Endothelial cell of umbilical vein (primary cell): ENCODE measurements at regions of chr2 and their contacts with region 1.

Region 1: GRCh38 chr2:215435809-215436704 is at the start of gene FN1:
- DNase-seq: peak; percentile 99
- H3K4me3 ChIP-seq: peak within 1 kb of the TSS; percentile 77 to 100 (median 99)
- H3K27ac ChIP-seq: peak within 1 kb of the TSS; percentile 100
- H3K4me1 ChIP-seq: peaks cover 44% of the 10 kb centered on the region
- H3K27me3 ChIP-seq: no peaks in the 10 kb centered on the region
- CTCF ChIP-seq: no peak
- POLR2A ChIP-seq: peak; percentile 98
- total RNA-seq, gene FN1: 3,221 and 3,760 TPM in 2 replicates

Region 2: GRCh38 chr2:215136669-215137328 is 299.3 kb before region 1 on chr2:
- CTCF ChIA-PET with region 1: no interaction called
- POLR2A ChIA-PET with region 1: no interaction called
- dilution Hi-C with region 1: no loop called
- intact Hi-C with region 1: no loop called
- DNase-seq: no peak
- H3K4me3 ChIP-seq: no peak overlapping the region
- H3K27ac ChIP-seq: no peak overlapping the region
- H3K4me1 ChIP-seq: no peaks in the 10 kb centered on the region
- H3K27me3 ChIP-seq: peaks cover 0 to 2% of the 10 kb centered on the region in 2 experiments
- CTCF ChIP-seq: no peak
- POLR2A ChIP-seq: no peak

Region 3: GRCh38 chr2:215425021-215425782 is 10.9 kb before region 1 on chr2:
- CTCF ChIA-PET with region 1: interaction called, 10 read pairs
- POLR2A ChIA-PET with region 1: interaction called, 8 read pairs
- dilution Hi-C with region 1: no loop called
- intact Hi-C with region 1: no loop called
- DNase-seq: no peak
- H3K4me3 ChIP-seq: no peak overlapping the region
- H3K27ac ChIP-seq: no peak overlapping the region
- H3K4me1 ChIP-seq: peaks cover 60% of the 10 kb centered on the region
- H3K27me3 ChIP-seq: no peaks in the 10 kb centered on the region
- CTCF ChIP-seq: no peak
- POLR2A ChIP-seq: peak; percentile 58

Region 4: GRCh38 chr2:215601990-215602721 is 166.1 kb after region 1 on chr2:
- CTCF ChIA-PET with region 1: no interaction called
- POLR2A ChIA-PET with region 1: interaction called, 8 read pairs
- dilution Hi-C with region 1: no loop called
- intact Hi-C with region 1: loop called (anchors 1 kb)
- DNase-seq: peak; percentile 97
- H3K4me3 ChIP-seq: peak overlapping the region in 1 of 3 experiments; percentile 19
- H3K27ac ChIP-seq: peak overlapping the region; percentile 85
- H3K4me1 ChIP-seq: peaks cover 24% of the 10 kb centered on the region
- H3K27me3 ChIP-seq: no peaks in the 10 kb centered on the region
- CTCF ChIP-seq: no peak
- POLR2A ChIP-seq: peak; percentile 62

Region 5: DNA sequence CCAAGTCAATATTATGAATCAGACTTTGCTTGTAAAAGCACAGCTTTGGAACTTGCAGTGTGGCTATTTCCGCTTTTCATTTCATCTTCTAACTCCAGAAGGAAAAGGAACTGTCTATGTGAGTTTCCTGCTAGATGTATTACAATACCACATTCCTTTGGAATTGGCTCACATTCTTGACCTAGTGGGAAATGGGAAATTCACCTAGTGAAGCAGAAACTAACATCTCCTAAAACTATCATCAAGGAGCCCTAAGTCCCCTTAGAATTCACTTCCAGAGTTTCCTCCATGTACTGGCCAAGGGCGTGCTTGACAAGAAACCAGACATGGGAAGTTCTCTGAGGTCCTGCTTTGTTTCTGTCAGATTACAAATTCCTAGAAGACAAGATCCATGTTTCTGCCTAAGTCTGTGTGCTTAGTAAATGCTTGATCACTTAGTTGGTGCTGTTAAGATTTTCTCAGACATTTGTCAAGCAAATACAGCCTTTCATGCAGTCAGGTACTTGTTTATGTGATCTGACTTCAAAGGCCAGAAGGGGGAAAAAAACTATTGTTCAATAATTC is 275.5 kb after region 1 on chr2:
- CTCF ChIA-PET with region 1: no interaction called
- POLR2A ChIA-PET with region 1: interaction called, 4 read pairs
- dilution Hi-C with region 1: no loop called
- intact Hi-C with region 1: loop called (anchors 1 kb)
- DNase-seq: peak; percentile 92
- H3K4me3 ChIP-seq: no peak overlapping the region
- H3K27ac ChIP-seq: peak overlapping the region; percentile 98
- H3K4me1 ChIP-seq: peaks cover 51% of the 10 kb centered on the region
- H3K27me3 ChIP-seq: no peaks in the 10 kb centered on the region
- CTCF ChIP-seq: no peak
- POLR2A ChIP-seq: peak; percentile 82

Region 6: GRCh38 chr2:215793747-215794595 is 357.9 kb after region 1 on chr2:
- CTCF ChIA-PET with region 1: no interaction called
- POLR2A ChIA-PET with region 1: no interaction called
- dilution Hi-C with region 1: no loop called
- intact Hi-C with region 1: loop called (anchors 1 kb)
- DNase-seq: peak; percentile 97
- H3K4me3 ChIP-seq: no peak overlapping the region
- H3K27ac ChIP-seq: peak overlapping the region; percentile 82
- H3K4me1 ChIP-seq: peaks cover 44% of the 10 kb centered on the region
- H3K27me3 ChIP-seq: no peaks in the 10 kb centered on the region
- CTCF ChIP-seq: no peak
- POLR2A ChIP-seq: no peak

Region 7: GRCh38 chr2:215920244-215921100 is 484.4 kb after region 1 on chr2:
- CTCF ChIA-PET with region 1: interaction called, 3 read pairs
- POLR2A ChIA-PET with region 1: no interaction called
- dilution Hi-C with region 1: no loop called
- intact Hi-C with region 1: loop called (anchors 1 kb)
- DNase-seq: peak; percentile 87
- H3K4me3 ChIP-seq: no peak overlapping the region
- H3K27ac ChIP-seq: no peak overlapping the region
- H3K4me1 ChIP-seq: peaks cover 12% of the 10 kb centered on the region
- H3K27me3 ChIP-seq: no peaks in the 10 kb centered on the region
- CTCF ChIP-seq: peak; percentile 76 to 93
- POLR2A ChIP-seq: no peak